Transverse colon (tissue), 4 donors: ENCODE measurements at regions of chr4 and their contacts with region 1.

Region 1: GRCh38 chr4:47570816-47571215 is 85.7 kb downstream of the ATP10D start:
- DNase-seq: no peak
- H3K4me3 ChIP-seq: no peak overlapping the region
- H3K27ac ChIP-seq: no peak overlapping the region
- H3K4me1 ChIP-seq: no peaks in the 10 kb centered on the region
- H3K27me3 ChIP-seq: no peaks in the 10 kb centered on the region
- CTCF ChIP-seq: no peak
- EP300 ChIP-seq: no peak
- POLR2A ChIP-seq: no peak

Region 2: DNA sequence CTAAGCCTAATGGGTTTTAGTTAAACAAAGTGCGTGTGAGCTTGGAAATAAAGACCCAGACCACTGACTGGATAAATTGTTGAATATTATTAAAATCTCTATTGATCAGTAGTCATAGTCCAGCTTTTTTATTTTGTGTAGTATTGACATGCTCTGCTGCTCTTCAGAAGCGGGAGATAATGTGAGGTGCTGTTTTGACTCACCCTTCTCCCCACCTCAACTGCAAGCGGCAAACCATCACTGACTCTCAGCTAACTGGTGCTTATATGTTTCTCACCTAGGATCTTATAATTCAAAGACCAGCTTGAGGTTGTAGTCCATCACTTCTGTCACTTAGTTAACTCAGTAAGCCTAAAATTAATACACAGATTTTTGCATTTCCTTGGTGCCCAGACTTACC is 179.6 kb before region 1 on chr4:
- in situ Hi-C with region 1: no loop called
- intact Hi-C with region 1: loop called (anchors 2 kb)
- DNase-seq: no peak
- H3K4me3 ChIP-seq: no peak overlapping the region
- H3K27ac ChIP-seq: no peak overlapping the region
- H3K4me1 ChIP-seq: no peaks in the 10 kb centered on the region
- H3K27me3 ChIP-seq: no peaks in the 10 kb centered on the region
- CTCF ChIP-seq: no peak
- EP300 ChIP-seq: no peak
- POLR2A ChIP-seq: no peak

Region 3: GRCh38 chr4:47729131-47729680 is 158.4 kb after region 1 on chr4:
- in situ Hi-C with region 1: no loop called
- intact Hi-C with region 1: no loop called
- DNase-seq: no peak
- H3K4me3 ChIP-seq: no peak overlapping the region
- H3K27ac ChIP-seq: no peak overlapping the region
- H3K4me1 ChIP-seq: no peaks in the 10 kb centered on the region
- H3K27me3 ChIP-seq: no peaks in the 10 kb centered on the region
- CTCF ChIP-seq: no peak
- EP300 ChIP-seq: no peak
- POLR2A ChIP-seq: no peak

Region 4: GRCh38 chr4:47824840-47825239 is 254.0 kb after region 1 on chr4:
- in situ Hi-C with region 1: no loop called
- intact Hi-C with region 1: no loop called
- DNase-seq: no peak
- H3K4me3 ChIP-seq: no peak overlapping the region
- H3K27ac ChIP-seq: no peak overlapping the region
- H3K4me1 ChIP-seq: no peaks in the 10 kb centered on the region
- H3K27me3 ChIP-seq: no peaks in the 10 kb centered on the region
- CTCF ChIP-seq: no peak
- EP300 ChIP-seq: no peak
- POLR2A ChIP-seq: no peak